AG04449 (cell line): ENCODE measurements at regions of chr20 and their contacts with region 1.

Region 1: GRCh38 chr20:10673988-10674711 is at the start of gene JAG1:
- DNase-seq: peak; percentile 82
- H3K4me3 ChIP-seq: peak within 1 kb of the TSS; percentile 92
- CTCF ChIP-seq: no peak

Region 2: DNA sequence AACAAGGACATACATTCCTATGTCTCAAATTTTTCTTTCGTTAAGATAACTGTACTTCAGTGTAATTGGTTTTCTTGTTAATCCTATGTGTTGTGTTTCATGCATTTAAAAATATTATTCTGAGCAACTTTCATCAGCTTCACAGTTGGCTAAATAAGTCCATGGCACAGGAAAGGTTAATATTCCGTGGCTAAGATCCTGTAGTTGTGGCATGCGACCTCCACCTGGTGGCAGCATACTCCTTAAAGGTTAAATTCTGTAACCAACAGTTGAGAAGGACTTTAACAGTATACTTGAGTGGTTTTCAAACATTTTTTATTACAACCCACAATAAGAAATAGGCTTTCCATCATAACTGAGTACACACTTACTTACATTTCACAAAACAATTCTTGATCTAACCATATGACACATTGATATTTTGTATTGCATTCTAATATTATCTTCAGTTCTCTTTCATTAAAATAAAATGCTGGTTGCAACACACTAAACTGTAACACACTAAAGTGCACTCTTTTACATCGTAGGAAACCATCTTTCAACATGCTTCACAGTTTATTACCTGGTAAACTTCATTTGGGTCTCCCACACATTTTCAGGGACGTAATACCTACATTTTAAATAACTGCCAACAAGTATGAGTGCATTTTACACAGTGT is 120.7 kb before region 1 on chr20:
- CTCF ChIA-PET with region 1: interaction called, 27 read pairs
- POLR2A ChIA-PET with region 1: interaction called, 4 read pairs
- DNase-seq: no peak
- H3K4me3 ChIP-seq: no peak overlapping the region
- CTCF ChIP-seq: peak; percentile 68

Region 3: DNA sequence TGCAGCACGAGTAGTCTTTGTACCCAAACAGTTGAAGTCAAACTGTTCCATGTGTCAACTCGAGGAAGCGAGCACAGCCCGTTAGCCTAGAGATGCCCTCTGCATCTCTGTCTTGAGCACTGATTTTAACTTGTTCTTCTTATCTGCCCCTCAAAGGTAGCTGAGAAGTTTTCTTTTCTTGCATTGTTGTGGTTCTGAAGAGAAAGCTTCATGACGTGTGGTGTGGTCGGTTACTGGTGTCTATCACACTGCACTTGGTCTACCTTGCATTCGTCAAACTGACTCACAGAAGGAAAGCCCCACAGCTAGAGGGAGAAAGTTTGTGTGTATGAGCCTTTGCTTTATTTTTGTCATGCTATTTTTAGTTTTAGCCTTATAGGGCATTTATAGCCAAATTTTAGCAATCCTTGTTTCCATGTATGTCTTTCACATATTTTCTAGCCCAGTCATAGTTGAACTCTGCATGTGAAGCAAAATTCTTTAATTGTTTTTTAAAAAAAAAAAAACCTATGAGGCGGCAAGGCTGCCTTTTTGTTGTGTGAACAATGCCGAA is 115.4 kb before region 1 on chr20:
- CTCF ChIA-PET with region 1: interaction called, 27 read pairs
- POLR2A ChIA-PET with region 1: interaction called, 4 read pairs
- DNase-seq: peak; percentile 95
- H3K4me3 ChIP-seq: peak overlapping the region; percentile 0
- CTCF ChIP-seq: peak; percentile 22

Region 4: DNA sequence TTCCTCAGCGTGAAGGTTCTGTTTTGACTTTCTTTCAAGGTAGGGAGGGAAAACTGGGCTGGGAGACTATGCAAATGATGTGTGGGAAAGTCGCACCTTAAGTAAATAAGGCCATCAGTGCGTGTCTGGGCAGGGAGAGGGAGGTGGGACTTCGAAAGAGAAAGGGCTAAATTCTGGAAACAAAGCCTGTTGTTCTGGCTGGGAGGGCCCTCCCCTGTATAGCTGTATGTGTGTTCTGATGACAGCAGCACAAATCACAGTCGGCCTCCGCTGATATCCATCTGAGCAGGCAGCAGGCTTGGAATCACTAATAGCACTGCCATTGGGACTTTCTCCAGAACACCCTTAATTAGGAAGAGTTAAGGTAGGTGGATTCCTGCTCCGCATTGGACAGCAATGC is 19.5 kb before region 1 on chr20:
- CTCF ChIA-PET with region 1: interaction called, 40 read pairs
- POLR2A ChIA-PET with region 1: interaction called, 4 read pairs
- DNase-seq: no peak
- H3K4me3 ChIP-seq: no peak overlapping the region
- CTCF ChIP-seq: no peak

Region 5: DNA sequence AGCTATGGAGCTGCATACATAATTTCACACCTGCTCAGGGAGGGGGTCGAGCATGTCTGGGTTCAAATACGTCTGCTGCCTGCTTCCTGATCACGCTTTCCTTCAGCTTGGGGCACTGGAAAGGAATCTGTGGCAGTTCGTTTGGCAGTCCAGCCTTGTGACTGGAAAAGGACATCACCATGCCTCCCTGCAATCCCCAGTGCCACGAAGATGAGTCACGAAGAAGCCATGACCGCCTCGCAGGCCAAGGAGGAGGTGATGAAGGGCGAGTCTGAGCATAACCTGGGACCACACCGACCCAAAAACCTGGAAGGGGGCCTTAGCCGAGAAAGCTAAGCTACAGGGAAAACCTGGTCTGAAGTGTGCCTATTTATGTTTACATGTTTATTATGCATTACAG is 13.5 kb before region 1 on chr20:
- CTCF ChIA-PET with region 1: interaction called, 40 read pairs
- POLR2A ChIA-PET with region 1: no interaction called
- DNase-seq: no peak
- H3K4me3 ChIP-seq: no peak overlapping the region
- CTCF ChIP-seq: no peak

Region 6: GRCh38 chr20:10696650-10697049 is 22.5 kb after region 1 on chr20:
- CTCF ChIA-PET with region 1: interaction called, 14 read pairs
- POLR2A ChIA-PET with region 1: no interaction called
- DNase-seq: no peak
- H3K4me3 ChIP-seq: no peak overlapping the region
- CTCF ChIP-seq: peak; percentile 15

Region 7: DNA sequence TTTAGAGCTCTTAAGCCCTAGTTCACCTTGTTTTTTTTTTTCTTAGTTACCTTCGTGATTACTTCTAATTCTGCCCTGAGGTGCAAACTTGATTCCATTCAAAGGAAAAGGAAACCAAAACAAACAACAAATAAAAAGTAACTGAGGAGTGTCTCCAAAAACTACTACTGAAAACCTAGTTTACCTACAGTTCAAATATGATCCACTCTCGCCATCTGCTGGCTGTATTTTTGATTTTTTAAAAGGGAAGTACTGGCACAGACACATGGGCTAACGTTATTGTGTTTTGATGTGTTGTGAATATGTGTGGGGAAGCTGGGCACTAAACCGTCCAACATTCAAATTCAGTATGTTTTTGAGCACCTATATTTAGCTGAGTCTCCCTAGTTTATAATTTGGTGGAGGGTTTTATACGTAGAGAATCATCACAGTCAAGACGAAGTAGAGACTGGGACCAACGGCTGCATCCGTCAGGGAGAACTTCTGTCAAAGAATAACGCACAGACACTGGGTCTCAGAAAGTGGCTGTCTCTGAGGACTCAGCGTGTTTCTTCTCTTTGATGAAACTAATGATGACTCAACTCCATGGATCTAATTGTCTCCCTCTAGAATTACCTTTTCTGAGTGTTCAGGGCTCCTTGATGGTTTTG is 870.0 kb after region 1 on chr20:
- CTCF ChIA-PET with region 1: interaction called, 11 read pairs
- POLR2A ChIA-PET with region 1: no interaction called
- DNase-seq: peak; percentile 12
- H3K4me3 ChIP-seq: no peak overlapping the region; the same call in 1 of the 2 replicates
- CTCF ChIP-seq: peak; percentile 36